Panc1 (cell line): ENCODE measurements at regions of chr11 and their contacts with region 1.

Region 1: DNA sequence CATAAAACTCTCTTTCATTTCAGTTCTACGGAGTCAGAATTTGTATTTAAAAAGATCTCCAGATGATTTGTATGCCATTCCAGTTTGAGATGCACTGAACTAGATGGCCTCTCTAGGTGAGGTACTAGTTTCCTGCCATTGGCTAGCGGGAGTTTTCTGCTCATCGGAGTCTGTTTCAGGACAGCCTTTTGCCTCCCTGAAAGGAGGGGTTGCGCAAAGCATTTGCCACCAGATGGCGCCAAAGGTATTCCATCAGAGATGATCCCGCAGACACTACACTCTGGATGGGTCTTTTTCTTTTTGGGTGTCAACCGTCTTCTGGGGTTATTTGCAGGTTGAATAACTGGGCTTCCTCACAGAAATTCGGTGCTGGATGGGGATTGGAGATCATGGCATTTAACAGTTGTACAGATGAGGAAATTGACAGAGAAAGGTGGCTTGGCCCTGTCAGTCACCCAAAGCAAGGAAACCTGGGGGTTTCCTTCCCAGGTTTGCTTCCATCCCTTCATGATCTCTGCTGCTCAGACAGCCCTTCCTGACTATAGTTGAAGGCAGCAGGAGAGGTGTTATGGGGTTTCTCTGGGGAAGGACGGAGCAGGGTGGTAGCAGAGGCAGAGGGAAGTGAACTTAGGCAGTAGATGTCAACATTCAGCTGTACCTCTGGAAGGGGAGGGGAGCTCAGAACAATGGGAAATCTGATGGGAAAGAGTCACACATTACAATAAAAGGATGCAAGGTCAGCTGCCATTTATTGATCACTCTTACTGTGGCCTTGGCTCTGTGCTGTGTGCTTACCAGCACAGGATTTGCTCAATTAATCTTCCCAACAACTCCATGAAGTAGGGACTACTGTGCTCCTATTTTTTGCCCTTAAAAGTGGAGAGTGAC is 81.6 kb downstream of the CCDC81 start:
- DNase-seq: peak; percentile 78
- ATAC-seq: peak; percentile 89
- H3K4me3 ChIP-seq: no peak overlapping the region
- H3K27ac ChIP-seq: peak overlapping the region; percentile 91
- H3K4me1 ChIP-seq: peaks cover 40% of the 10 kb centered on the region
- H3K27me3 ChIP-seq: no peaks in the 10 kb centered on the region
- CTCF ChIP-seq: peak; percentile 95

Region 2: GRCh38 chr11:86421946-86422345 is 34.4 kb before region 1 on chr11:
- CTCF ChIA-PET with region 1: no interaction called
- POLR2A ChIA-PET with region 1: no interaction called
- in situ Hi-C with region 1: no loop called
- intact Hi-C with region 1: no loop called
- DNase-seq: no peak
- ATAC-seq: no peak
- H3K4me3 ChIP-seq: no peak overlapping the region
- H3K27ac ChIP-seq: no peak overlapping the region
- H3K4me1 ChIP-seq: no peaks in the 10 kb centered on the region
- H3K27me3 ChIP-seq: no peaks in the 10 kb centered on the region
- CTCF ChIP-seq: no peak

Region 3: GRCh38 chr11:86483940-86484794 is 27.9 kb after region 1 on chr11:
- CTCF ChIA-PET with region 1: no interaction called
- POLR2A ChIA-PET with region 1: interaction called, 15 read pairs
- in situ Hi-C with region 1: no loop called
- intact Hi-C with region 1: no loop called
- DNase-seq: peak; percentile 90
- ATAC-seq: peak; percentile 84
- H3K4me3 ChIP-seq: no peak overlapping the region
- H3K27ac ChIP-seq: peak overlapping the region; percentile 83
- H3K4me1 ChIP-seq: peaks cover 13% of the 10 kb centered on the region
- H3K27me3 ChIP-seq: no peaks in the 10 kb centered on the region
- CTCF ChIP-seq: no peak

Region 4: DNA sequence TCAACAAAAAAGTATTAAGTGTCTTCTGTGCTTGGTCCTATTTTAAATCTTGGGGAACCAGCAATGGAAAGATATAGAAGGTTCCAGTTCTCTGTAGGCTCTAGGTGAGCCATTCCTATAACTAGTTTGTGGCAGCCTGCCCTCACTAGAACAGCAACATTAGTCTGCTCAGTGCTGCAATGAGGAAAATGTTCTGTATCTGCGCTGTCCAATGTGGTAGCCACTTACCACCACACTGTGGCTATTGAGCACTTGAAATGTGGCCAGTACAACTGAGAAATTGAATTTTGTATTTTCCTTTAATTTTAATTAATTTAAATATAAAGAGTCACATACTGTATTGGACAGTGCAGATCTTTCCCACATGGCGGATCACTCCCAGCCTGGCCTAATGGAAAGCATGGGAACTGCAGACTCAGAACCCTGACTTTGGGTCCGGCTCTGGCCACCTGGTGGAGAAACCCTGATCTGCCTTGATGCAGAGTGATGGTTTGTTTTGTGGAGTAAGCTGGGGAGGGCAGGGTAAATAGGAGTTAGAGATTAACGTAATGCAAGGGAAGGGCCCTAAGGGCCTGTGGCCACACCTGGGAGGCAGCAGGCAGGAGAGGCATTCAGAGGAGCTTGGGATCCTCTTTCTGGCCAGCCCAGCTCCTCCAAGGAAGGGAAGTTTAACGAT is 115.1 kb after region 1 on chr11:
- CTCF ChIA-PET with region 1: no interaction called
- POLR2A ChIA-PET with region 1: interaction called, 6 read pairs
- in situ Hi-C with region 1: no loop called
- intact Hi-C with region 1: loop called (anchors 5 kb)
- DNase-seq: no peak
- ATAC-seq: peak; percentile 80
- H3K4me3 ChIP-seq: no peak overlapping the region
- H3K27ac ChIP-seq: peak overlapping the region; percentile 58
- H3K4me1 ChIP-seq: peaks cover 41% of the 10 kb centered on the region
- H3K27me3 ChIP-seq: no peaks in the 10 kb centered on the region
- CTCF ChIP-seq: peak; percentile 80

Region 5: GRCh38 chr11:86671682-86672621 is 215.7 kb after region 1 on chr11 and contains the start of gene ME3:
- CTCF ChIA-PET with region 1: no interaction called
- POLR2A ChIA-PET with region 1: no interaction called
- in situ Hi-C with region 1: no loop called
- intact Hi-C with region 1: loop called (anchors 5 kb)
- DNase-seq: no peak
- ATAC-seq: peak; percentile 86
- H3K4me3 ChIP-seq: peak within 1 kb of the TSS; percentile 67 to 77
- H3K27ac ChIP-seq: peak within 1 kb of the TSS; percentile 99
- H3K4me1 ChIP-seq: peaks cover 70% of the 10 kb centered on the region
- H3K27me3 ChIP-seq: no peaks in the 10 kb centered on the region
- CTCF ChIP-seq: peak; percentile 40
- total RNA-seq, gene ME3: 35.3 TPM

Region 6: DNA sequence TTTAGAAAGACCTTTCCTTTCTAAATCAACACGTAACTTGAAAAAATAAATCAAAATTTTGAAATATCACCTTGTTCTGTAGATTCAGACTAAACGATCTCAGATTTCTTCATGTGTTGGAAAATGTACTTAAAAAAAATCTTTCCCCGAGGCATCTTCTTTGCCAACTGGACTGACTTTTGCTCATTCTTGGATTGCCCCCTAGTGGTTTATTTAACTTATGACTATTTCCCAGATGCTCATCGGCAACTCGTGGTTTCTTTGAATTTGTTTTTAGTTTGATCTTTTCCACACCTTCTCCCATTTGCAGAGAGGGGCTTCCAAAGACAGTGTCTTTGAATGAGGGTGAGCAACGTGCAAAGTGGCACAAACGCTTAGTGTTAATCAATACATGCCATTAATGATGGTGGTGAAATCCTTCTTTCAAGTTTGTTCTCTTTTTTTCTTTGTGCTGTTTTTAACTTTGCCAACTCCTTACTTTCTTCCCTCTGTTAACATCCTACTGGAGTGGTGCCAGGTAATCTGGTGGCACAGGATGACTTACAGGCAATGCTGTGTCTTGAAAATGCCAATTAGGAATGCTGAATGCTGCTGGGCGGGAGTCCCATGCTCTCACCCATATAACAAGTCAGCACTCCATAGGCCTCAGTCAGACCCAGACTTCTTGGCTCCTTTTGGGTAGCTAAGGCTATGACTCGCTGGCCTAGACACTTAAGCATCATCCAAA is 362.3 kb after region 1 on chr11:
- CTCF ChIA-PET with region 1: no interaction called
- POLR2A ChIA-PET with region 1: no interaction called
- in situ Hi-C with region 1: no loop called
- intact Hi-C with region 1: loop called (anchors 2 kb)
- DNase-seq: no peak
- ATAC-seq: peak; percentile 51
- H3K4me3 ChIP-seq: no peak overlapping the region
- H3K27ac ChIP-seq: peak overlapping the region; percentile 86
- H3K4me1 ChIP-seq: peaks cover 60% of the 10 kb centered on the region
- H3K27me3 ChIP-seq: no peaks in the 10 kb centered on the region
- CTCF ChIP-seq: peak; percentile 83